WTC11 (cell line): ENCODE measurements at regions of chr16 and their contacts with region 1.

Region 1: GRCh38 chr16:87765776-87766484 is at the start of gene KLHDC4:
- DNase-seq: peak; percentile 88
- ATAC-seq: peak; percentile 73
- H3K4me3 Mint-ChIP-seq: peak within 1 kb of the TSS; percentile 100
- H3K27ac Mint-ChIP-seq: peak within 1 kb of the TSS; percentile 95
- H3K4me1 Mint-ChIP-seq: peaks cover 6% of the 10 kb centered on the region; the same call in 1 of the 2 replicates
- H3K27me3 Mint-ChIP-seq: no peaks in the 10 kb centered on the region
- CTCF ChIP-seq: no peak
- total RNA-seq, gene KLHDC4: 60.0 to 63.6 TPM (median 60.5 TPM) in 3 replicates

Region 2: GRCh38 chr16:87587636-87588035 is 178.3 kb before region 1 on chr16:
- CTCF ChIA-PET with region 1: interaction called, 12 read pairs
- POLR2A ChIA-PET with region 1: no interaction called
- DNase-seq: no peak
- ATAC-seq: no peak
- H3K4me3 Mint-ChIP-seq: no peak overlapping the region
- H3K27ac Mint-ChIP-seq: no peak overlapping the region
- H3K4me1 Mint-ChIP-seq: peaks cover 23% of the 10 kb centered on the region
- H3K27me3 Mint-ChIP-seq: peaks cover 5% of the 10 kb centered on the region; the same call in 1 of the 2 replicates
- CTCF ChIP-seq: no peak

Region 3: DNA sequence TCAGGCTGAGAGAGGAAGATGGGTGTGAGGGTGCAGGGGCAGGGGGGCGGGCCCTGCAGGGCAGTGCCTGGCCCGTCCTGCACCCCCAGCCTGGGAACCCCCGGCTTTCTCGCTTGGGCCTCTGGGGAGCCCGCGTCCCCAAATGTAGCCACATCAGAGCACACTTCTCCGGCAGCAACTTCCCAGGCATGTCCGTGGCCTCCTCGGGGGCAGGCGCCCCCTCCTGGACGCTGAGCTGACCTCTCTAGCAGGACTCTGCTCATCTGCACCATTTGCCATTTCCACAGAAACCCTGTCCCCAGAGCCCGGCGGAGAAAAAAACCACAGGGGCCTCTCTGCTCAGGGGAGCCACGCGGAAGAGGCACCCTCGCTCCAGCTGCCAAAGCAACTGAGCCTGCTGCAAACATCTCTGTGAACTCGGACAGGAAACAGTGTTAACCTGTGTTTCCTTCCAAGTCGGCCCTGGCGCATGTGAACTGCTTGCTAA is 63.6 kb before region 1 on chr16:
- CTCF ChIA-PET with region 1: interaction called, 13 read pairs
- POLR2A ChIA-PET with region 1: no interaction called
- DNase-seq: peak; percentile 74
- ATAC-seq: peak; percentile 74
- H3K4me3 Mint-ChIP-seq: no peak overlapping the region
- H3K27ac Mint-ChIP-seq: peak overlapping the region; percentile 53; the same call in 1 of the 2 replicates
- H3K4me1 Mint-ChIP-seq: peaks cover 8% of the 10 kb centered on the region
- H3K27me3 Mint-ChIP-seq: no peaks in the 10 kb centered on the region
- CTCF ChIP-seq: peak; percentile 39; the same call in 1 of the 2 replicates

Region 4: DNA sequence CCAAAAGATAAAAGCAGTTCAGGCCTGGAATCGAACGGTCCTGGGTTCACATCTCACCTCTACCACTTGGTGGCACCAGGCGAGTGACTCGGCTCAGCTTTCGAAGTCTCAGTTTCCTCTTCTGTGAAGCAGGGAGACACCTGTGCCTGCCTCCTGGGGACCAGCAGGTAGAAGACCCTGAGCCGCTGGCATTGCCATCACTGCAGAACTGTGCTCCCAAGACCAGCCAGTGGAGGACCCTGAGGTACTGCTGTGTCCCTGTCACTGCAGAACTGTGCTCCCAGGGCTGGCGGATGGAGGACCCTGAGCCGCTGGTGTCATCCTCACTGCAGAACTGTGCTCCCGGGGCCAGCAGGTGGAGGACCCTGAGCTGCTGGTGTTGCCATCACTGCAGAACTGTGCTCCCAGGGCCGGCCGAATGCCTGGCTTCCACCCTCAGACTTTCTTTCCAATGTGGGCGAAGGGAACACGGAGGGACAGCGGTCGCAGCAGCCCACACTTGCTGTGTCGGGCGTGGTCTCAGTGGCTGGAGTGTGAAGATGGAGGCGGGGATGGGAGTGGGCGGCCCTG is 112.1 kb after region 1 on chr16:
- CTCF ChIA-PET with region 1: interaction called, 26 read pairs
- POLR2A ChIA-PET with region 1: no interaction called
- DNase-seq: no peak
- ATAC-seq: no peak
- H3K4me3 Mint-ChIP-seq: no peak overlapping the region
- H3K27ac Mint-ChIP-seq: no peak overlapping the region
- H3K4me1 Mint-ChIP-seq: peaks cover 70% of the 10 kb centered on the region
- H3K27me3 Mint-ChIP-seq: no peaks in the 10 kb centered on the region
- CTCF ChIP-seq: no peak